Left cardiac atrium (tissue), 4 donors: ENCODE measurements at regions of chr15 and their contacts with region 1.

Region 1: DNA sequence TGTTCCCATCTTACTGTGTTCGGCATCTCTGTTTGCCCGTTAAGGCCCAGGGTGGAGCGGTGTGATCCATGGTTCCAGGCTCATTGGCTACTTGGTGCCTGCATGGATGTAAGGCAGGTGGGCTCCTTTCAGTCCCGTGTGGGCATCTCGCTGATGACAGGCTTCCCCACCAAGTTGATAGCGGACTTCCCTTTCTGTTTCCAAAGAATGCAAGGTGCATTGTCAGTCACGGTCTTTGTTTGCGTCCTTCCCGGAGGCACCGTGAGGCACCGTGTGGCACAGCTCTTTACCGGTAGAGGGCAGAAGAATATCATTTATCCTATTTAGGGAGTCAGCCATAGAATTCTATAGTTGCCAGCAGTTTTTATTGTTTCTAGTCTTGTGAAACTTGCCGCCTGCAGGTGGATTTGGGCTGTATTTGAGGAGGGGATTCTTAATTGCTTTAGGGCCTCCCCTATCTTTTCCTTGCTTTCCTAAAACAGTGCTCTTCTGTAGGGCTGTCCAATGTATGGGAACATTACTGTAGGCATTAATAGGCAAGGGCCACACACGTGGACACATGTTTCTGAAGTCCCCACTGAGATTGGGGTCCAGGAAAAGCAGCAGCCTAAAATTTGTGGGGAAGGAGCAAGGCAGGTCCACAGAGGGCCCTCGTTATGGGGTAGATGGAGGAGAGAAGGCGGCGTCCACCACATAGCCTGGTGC is 244.1 kb downstream of the SLCO3A1 start:
- DNase-seq: no peak
- ATAC-seq: peak; percentile 74 to 81

Region 2: DNA sequence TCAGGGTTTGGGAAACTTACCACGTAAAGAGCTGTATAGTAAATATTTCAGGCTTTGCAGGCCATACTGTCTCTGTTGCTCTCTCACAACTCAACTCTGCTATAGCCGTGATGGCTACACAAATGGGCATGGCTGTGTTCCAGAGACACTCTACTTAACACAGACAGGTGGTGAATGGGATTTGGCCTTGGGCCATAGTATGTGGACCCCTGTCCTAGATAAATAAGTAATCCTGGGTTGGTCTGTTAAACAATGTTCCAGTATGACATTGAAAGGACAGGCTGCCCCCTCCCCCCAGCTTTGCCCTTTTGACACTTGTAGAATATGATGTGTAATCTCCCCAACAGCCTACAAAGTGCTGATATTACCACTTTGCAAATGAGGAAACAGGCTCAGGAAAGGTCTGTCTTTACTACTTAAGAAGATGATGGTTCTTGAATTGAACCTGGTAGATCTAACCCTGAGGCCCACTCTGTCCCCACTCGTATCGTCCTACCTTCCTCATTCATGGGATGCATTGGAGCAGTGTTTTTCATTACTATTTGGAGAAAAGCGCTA is 205.8 kb before region 1 on chr15:
- intact Hi-C with region 1: no loop called
- DNase-seq: peak; percentile 39
- ATAC-seq: peak; percentile 57 to 80

Region 3: GRCh38 chr15:92034227-92034626 is 63.4 kb before region 1 on chr15:
- intact Hi-C with region 1: no loop called
- DNase-seq: no peak
- ATAC-seq: peak in 1 of 2 donors; percentile 77

Region 4: GRCh38 chr15:92205255-92205739 is 107.7 kb after region 1 on chr15:
- intact Hi-C with region 1: loop called (anchors 2 to 10 kb)
- DNase-seq: no peak
- ATAC-seq: peak; percentile 47 to 53

Region 5: GRCh38 chr15:92377083-92377789 is 279.6 kb after region 1 on chr15:
- intact Hi-C with region 1: loop called in 1 of 2 experiments (anchors 10 kb)
- DNase-seq: peak; percentile 29
- ATAC-seq: peak; percentile 92 to 96